Right ventricle myocardium inferior (tissue), 1 donor: ENCODE measurements at regions of chr10 and their contacts with region 1.

Region 1: DNA sequence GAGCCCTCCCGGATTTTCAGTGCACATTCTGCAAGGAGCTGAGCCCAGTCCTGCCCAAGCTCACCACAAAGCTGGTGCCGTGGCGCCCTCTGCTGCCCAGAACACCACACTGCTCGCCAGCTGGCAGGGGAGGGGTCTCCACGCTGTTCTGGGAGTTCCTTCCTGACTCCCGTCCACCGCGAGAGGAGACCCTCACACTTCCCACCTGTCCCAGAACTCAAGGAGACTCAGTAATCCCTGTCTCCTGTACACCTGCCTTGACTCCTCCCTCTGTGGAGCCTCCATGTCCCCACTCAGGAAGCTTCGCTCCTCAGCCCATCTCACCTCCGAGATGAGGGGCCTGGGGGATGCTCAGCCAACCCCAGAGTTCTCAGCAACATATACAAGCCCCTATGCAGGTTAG is 11.3 kb downstream of the C10orf105 start:
- DNase-seq: peak; percentile 91
- ATAC-seq: no peak

Region 2: GRCh38 chr10:71396084-71396720 is 312.1 kb before region 1 on chr10:
- intact Hi-C with region 1: loop called (anchors 2 kb)
- DNase-seq: peak; percentile 76
- ATAC-seq: peak; percentile 92

Region 3: DNA sequence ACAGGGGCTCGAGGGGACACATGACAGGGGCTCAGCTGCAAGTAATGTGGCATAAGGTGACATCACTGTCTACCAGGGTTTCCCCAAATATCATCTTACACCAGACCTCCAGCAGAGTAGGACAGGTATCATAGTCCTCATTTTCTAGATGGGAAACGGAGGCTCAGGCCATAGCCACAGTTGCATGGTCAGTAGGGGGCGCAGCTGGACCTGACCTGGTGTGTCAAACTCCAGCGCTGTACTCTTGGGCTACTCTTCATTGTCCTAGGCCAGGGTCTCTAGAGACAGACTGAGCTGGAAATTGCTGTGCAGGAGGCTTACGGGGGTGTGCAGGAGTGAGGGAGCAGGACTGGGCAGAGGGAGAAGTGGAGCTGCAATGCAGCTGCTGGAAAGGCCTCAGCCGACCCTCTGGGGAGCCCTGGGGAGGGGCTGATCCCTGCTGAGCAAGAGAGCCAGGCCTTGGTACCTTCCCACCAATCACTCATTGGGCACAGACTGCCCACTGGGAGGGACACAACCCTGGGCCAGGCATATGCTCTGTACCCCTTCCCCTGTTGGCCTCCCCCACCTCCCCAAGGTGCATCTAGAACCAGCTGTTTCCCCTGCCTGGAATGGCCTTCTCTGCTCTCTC is 221.7 kb before region 1 on chr10:
- intact Hi-C with region 1: loop called (anchors 5 kb)
- DNase-seq: no peak
- ATAC-seq: no peak

Region 4: DNA sequence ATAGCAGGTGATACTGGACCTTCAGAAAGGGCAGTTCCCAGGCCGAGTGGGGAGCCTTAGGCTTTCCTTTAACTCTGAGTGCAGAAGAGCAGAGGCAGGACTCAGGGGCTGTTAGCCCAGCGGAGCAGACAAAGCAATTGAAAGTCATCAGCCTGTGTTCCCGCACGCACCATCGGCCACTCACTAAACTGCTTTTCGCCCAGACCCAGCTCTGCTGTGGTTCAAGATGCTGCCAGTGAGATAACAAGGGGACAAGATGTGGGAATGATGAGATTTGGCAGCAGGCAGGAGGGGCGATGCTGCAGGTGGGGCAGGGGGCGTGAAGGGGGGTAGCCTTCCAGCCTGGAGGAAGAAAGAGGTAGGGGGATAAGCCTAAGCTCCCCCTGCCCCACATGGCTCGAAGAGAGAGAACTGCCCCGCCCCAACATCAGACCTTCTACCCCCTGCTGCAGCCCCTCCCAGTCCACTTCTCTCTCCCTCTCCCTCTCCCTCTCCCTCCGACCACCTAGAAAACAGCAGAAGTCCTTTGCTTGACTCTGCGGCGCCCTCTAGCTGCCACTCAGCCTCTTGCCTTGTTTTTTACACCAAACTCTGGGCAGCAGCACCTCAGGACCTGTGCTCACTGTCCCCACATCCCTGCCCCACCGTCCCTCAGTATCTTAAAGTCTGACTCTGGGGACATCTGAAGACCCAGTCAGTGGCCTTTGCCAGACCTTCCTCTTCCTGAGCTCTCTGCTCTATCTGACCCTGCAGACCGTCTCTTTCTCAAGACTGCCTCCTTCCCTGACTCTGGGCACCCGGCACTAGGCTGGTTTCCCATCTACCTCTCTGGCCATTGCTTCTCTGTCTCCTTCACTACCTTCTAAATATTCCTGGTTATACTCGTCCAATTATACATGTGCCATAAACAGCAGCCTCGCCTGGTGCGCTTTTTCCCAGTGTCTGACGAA is 99.2 kb before region 1 on chr10:
- intact Hi-C with region 1: loop called (anchors 5 kb)
- DNase-seq: peak; percentile 88
- ATAC-seq: peak; percentile 57

Region 5: GRCh38 chr10:71812016-71812912 is 104.0 kb after region 1 on chr10:
- intact Hi-C with region 1: loop called (anchors 5 kb)
- DNase-seq: peak; percentile 87
- ATAC-seq: peak; percentile 80